Mucosa of descending colon (tissue), 3 donors: ENCODE measurements at regions of chr3 and their contacts with region 1.

Region 1: DNA sequence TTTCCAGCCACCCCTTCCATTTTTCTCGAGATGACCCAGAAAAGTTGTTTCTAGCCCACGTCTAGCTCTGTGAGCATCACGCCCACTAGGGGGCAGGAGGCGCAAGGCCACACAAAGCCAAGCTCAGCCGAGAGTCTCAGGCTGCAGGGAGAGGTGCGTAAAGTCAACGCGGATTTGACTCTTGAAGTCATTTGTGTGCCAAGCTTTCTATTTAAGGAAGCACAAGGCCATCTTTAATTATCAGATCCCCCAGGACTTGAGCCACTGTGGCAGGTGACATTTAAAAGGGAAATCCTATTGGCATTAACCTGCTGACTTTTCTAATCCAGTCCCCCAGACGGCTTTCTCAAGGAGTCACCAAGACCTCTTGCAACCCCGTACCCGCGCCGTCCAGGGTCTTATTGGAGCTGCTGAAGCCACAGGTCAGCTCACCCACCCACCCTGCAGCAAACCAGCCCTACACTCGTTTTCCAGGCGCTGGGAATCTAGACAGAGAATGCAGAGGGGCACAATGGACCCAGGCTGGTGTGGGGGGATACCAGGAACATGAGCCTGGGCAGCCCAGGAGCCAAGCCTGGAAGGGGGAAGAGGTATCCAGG is 62.1 kb downstream of the CAPN7 start:
- DNase-seq: peak; percentile 85 to 95 (median 87)
- ATAC-seq: peak; percentile 83
- H3K4me3 ChIP-seq: no peak overlapping the region
- H3K4me1 ChIP-seq: peaks cover 18% of the 10 kb centered on the region
- CTCF ChIP-seq: peak; percentile 88

Region 2: GRCh38 chr3:15291589-15292541 is 23.7 kb after region 1 on chr3:
- intact Hi-C with region 1: no loop called
- DNase-seq: peak in 2 of 3 donors; percentile 35 to 78
- ATAC-seq: peak; percentile 70
- H3K4me3 ChIP-seq: no peak overlapping the region
- H3K4me1 ChIP-seq: peaks cover 10% of the 10 kb centered on the region
- CTCF ChIP-seq: no peak

Region 3: GRCh38 chr3:15332405-15333098 is 64.4 kb after region 1 on chr3 and contains the start of gene SH3BP5:
- intact Hi-C with region 1: loop called (anchors 5 to 10 kb)
- DNase-seq: peak; percentile 71 to 84 (median 81)
- ATAC-seq: peak; percentile 95
- H3K4me3 ChIP-seq: peak within 1 kb of the TSS; percentile 68
- H3K4me1 ChIP-seq: peaks cover 10% of the 10 kb centered on the region
- CTCF ChIP-seq: peak; percentile 71
- total RNA-seq, gene SH3BP5: 5.9 to 20.8 (median 10.9) TPM

Region 4: GRCh38 chr3:15377961-15378791 is 110.0 kb after region 1 on chr3:
- intact Hi-C with region 1: loop called (anchors 10 kb)
- DNase-seq: peak; percentile 93 to 97 (median 94)
- ATAC-seq: peak; percentile 99
- H3K4me3 ChIP-seq: no peak overlapping the region
- H3K4me1 ChIP-seq: no peaks in the 10 kb centered on the region
- CTCF ChIP-seq: peak; percentile 83

Region 5: DNA sequence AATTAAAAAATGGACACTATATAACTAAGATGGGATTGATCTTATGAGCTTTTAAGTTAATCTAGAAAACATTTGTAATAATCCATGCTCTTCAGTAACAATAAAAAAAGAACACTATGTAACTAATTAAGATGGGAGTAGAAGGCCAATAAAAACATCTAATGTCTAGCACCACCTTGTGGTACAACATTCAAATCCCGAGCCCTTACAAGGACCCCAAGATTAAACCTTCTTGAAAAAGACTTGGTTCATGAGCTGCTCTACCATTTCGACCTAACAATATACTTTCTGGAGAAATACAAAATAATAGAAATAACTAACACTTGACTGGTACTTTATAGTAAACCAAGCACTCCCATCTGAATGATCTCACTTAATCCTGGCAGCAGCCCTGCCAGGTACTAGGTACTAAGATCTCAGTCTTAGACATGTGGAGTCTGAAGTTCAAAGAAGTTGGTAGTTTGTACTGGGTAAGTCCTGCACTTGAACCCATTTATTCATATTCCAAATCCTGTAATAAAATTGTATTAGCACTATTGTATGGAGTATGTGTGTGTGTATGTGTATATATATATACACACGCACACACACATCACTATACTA is 137.4 kb after region 1 on chr3:
- intact Hi-C with region 1: loop called in 1 of 2 experiments (anchors 5 kb)
- DNase-seq: peak in 1 of 3 donors; percentile 50
- ATAC-seq: peak; percentile 66
- H3K4me3 ChIP-seq: no peak overlapping the region
- H3K4me1 ChIP-seq: no peaks in the 10 kb centered on the region
- CTCF ChIP-seq: peak; percentile 48

Region 6: GRCh38 chr3:15476378-15476777 is 208.2 kb after region 1 on chr3:
- intact Hi-C with region 1: no loop called
- DNase-seq: no peak
- ATAC-seq: no peak
- H3K4me3 ChIP-seq: no peak overlapping the region
- H3K4me1 ChIP-seq: no peaks in the 10 kb centered on the region
- CTCF ChIP-seq: no peak